Activated CD4-positive, alpha-beta T cell treated with anti-CD3 and anti-CD28 coated beads, Interleukin-2, amount 10 ng/mL, durations not matched to agents 24 days and 14 days (primary cell): ENCODE measurements at regions of chr1 and their contacts with region 1.

Region 1: GRCh38 chr1:228275739-228276421 is 68.0 kb downstream of the OBSCN start:
- DNase-seq: peak; percentile 96
- H3K4me3 Mint-ChIP-seq: peak overlapping the region; percentile 80
- H3K27ac Mint-ChIP-seq: peak overlapping the region; percentile 34
- H3K4me1 Mint-ChIP-seq: peaks cover 6% of the 10 kb centered on the region
- H3K27me3 Mint-ChIP-seq: no peaks in the 10 kb centered on the region

Region 2: DNA sequence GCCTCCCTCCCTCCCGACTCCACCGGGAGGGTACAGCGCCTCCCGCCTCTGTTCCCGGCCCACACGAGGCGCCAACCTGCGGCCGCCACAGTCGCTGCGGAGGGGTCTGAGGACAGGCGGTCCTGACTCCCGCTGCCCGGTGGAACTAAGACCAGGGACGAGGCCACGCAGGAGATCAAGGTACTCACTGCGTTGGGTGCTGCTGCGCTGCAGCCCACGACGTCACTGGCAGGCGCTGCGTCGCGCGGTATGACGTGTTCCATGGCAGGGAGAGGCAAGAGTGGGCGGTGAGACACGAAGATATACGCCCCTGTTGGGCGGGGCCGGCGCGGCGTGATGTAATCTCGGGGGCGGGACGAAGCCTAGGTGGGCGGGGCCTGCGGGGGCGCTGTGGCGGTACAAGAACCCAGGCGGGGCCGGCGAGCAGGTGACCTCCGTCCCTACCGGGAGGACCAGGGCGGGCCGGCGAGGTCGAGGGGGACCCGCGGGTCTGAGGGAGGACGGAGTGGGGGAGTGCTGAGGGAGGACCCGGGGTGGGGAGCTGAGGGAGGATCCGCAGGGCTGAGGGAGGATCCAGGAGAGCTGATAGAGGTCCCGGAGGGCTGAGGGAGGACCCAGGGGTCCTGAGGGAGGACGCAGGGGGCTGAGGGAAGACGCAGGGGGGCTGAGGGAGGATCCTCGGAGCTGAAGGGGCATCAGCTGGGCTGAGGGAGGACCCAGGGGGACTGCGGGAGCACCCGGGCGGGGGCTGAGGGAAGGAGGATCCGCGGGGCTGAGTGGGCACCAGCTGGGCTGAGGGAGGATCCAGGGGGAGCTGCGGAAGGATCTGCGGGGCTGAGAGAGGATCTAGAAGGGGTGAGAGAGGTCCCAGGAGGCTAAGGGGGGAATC is 166.6 kb before region 1 on chr1 and contains the start of gene MRPL55:
- intact Hi-C with region 1: loop called (anchors 2 kb)
- DNase-seq: peak; percentile 100
- H3K4me3 Mint-ChIP-seq: peak within 1 kb of the TSS; percentile 95
- H3K27ac Mint-ChIP-seq: peak within 1 kb of the TSS; percentile 88
- H3K4me1 Mint-ChIP-seq: peaks cover 23% of the 10 kb centered on the region
- H3K27me3 Mint-ChIP-seq: peaks cover 2% of the 10 kb centered on the region
- total RNA-seq, gene MRPL55: 55.2 and 62.2 TPM in 2 replicates